Activated naive CD8-positive, alpha-beta T cell treated with anti-CD3 and anti-CD28 coated beads, Interleukin-2, amount 10 ng/mL, durations not matched to agents 7 days and 5 days (primary cell): ENCODE measurements at regions of chr16 and their contacts with region 1.

Region 1: DNA sequence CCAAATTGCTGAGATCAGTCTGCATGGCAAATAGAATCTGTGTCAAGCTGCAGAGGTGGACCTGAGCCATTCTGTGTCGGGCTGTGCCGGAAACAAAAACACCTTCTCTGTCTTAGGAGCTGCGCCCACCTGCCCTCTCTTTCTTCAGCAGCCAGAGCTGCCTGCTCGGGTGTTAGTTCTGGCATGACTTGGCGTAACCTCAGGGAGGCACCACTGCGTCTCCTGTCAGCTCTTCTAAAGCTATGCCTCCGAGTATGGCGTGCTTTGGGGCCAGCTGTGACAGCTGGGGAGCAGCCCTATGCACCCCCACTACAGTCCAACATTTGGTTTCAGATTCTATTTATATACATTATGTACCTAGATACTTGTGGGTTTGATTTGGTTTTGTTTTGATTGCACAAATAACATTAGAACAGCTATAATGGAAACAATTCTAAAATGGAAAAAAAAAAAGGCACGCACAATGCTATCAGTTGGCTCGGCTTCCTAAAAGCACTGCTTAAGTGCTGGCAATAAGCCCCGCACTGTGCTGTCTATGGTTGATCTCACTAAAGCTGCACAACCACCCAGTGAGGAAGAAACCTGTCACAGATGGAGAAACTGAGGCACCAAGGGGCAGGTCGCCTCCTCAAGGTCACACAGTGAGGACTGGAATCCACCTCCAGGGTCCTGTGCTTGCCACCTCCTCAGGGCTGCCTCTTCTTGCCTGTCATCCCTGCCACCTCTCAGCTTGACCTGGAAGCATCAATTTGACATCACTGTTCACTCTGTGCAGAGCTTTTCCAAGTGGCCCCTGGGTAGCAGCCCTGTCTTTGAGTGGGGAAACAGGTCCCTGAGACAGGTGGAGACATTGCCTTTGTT is 18.7 kb upstream of the ADGRG1 start:
- DNase-seq: peak; percentile 66
- ATAC-seq: peak; percentile 93
- H3K4me3 Mint-ChIP-seq: peak overlapping the region; percentile 67
- H3K27ac Mint-ChIP-seq: peak overlapping the region; percentile 93
- H3K4me1 Mint-ChIP-seq: peaks cover 51% of the 10 kb centered on the region
- H3K27me3 Mint-ChIP-seq: no peaks in the 10 kb centered on the region

Region 2: DNA sequence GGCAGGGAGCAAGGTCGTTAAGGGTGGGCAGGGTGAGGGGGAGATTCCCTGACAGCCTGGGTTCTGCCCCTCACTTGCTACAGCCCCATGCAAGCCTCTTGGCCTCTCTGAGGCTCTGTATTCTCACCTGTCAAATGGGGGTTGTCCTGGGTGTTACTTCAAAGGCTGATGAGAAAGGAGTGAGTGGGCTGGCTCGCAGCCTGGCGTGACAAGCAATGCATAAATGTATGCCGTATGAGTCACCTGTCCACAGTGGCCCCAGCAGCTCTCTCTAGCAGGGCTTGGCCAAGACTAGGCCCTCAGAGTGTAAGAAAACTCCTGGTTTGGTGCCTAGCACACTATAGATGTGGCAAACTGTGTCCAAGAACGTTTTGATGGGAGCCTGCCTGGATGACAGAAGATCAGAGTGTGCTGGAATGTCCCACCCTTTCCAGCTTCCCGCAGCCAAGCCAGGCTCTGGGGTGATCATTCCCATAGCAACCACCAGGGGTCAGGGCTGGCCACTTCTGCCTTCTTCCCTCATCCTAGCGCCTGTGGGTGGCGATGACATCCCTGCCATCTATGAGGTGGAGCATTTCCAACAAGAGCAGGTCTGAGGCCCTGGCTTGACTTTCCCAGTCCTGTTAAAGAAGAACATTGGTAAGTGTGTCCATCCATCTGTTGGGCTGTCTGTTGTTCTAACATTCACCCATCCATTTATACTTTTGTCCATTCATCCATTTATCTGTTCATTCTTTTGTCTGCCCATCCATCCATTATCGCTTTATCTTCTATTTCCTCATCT is 18.5 kb before region 1 on chr16:
- POLR2A ChIA-PET with region 1: interaction called, 32 read pairs
- DNase-seq: peak; percentile 78
- ATAC-seq: peak; percentile 73
- H3K4me3 Mint-ChIP-seq: peak overlapping the region; percentile 77
- H3K27ac Mint-ChIP-seq: peak overlapping the region; percentile 93
- H3K4me1 Mint-ChIP-seq: peaks cover 53% of the 10 kb centered on the region
- H3K27me3 Mint-ChIP-seq: no peaks in the 10 kb centered on the region

Region 3: DNA sequence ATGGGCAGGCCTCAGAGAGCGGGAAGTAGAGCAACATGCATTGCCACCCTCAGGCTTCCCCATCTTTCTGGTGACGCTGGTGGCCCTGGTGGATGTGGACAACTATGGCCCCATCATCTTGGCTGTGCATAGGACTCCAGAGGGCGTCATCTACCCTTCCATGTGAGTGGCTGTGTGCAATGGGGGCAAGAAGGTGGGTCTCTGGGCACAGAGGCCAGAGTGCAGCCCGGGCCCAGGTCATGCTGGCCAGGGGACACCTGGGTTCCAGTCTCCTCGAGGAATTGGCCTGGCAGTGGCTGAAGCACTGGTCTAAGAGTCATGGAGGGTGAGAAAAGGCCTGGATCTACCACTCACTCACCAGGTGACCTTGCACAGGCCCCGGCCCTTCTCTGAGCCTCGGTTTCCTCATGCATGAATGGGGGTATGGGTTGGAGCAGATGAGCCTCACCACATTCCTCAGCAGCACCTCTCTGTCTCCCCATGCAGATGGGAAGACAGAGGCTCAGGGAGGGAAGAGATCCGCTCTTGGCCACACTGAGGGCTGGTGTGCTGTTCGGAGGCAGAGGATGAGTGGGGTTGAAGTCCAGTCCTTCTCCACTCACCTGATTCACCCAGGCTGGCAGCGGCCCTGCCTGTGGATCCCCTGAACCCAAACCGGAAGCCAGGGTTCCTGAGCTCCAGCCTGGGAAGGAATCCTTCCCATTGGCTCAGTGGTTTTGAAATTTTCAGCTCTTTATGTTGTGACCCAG is 51.1 kb after region 1 on chr16:
- POLR2A ChIA-PET with region 1: no interaction called
- DNase-seq: no peak
- ATAC-seq: no peak
- H3K4me3 Mint-ChIP-seq: no peak overlapping the region
- H3K27ac Mint-ChIP-seq: no peak overlapping the region
- H3K4me1 Mint-ChIP-seq: no peaks in the 10 kb centered on the region
- H3K27me3 Mint-ChIP-seq: no peaks in the 10 kb centered on the region